ENCODE measurements at regions of chr3 and their contacts with region 1.

Region 1: GRCh38 chr3:44198284-44199269 is 43.1 kb upstream of the TOPAZ1 start:
- DNase-seq: no peak
- H3K4me3 ChIP-seq: no peak overlapping the region
- H3K27ac ChIP-seq: no peak overlapping the region
- H3K4me1 ChIP-seq: no peaks in the 10 kb centered on the region
- H3K27me3 ChIP-seq: no peaks in the 10 kb centered on the region
- CTCF ChIP-seq: peak; percentile 75 to 84 (median 77)
- EP300 ChIP-seq: no peak
- POLR2A ChIP-seq: no peak

Region 2: DNA sequence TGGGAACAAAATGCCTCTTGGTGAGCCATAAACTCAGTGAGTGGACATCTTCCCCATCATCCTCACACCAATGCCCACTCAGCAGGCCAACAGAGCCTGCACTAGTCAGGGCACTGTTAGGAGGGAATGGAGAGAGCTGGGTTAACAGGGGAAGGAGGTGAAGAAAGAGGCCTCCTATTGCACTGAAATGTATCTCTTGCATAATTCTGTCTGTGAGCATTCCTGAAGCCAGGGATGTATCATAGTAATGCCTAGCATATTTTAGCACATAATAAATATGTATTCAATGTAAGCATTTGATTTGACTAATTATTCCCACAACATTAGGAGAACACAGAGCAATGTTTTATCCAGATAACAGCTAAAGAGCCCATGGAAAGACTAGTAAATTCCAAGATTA is 658.0 kb before region 1 on chr3:
- intact Hi-C with region 1: loop called (anchors 2 kb)
- DNase-seq: no peak
- H3K4me3 ChIP-seq: no peak overlapping the region
- H3K27ac ChIP-seq: no peak overlapping the region
- H3K4me1 ChIP-seq: peaks cover 0 to 4% (median 2%) of the 10 kb centered on the region in 4 donors
- H3K27me3 ChIP-seq: no peaks in the 10 kb centered on the region
- CTCF ChIP-seq: no peak
- EP300 ChIP-seq: no peak
- POLR2A ChIP-seq: no peak

Region 3: DNA sequence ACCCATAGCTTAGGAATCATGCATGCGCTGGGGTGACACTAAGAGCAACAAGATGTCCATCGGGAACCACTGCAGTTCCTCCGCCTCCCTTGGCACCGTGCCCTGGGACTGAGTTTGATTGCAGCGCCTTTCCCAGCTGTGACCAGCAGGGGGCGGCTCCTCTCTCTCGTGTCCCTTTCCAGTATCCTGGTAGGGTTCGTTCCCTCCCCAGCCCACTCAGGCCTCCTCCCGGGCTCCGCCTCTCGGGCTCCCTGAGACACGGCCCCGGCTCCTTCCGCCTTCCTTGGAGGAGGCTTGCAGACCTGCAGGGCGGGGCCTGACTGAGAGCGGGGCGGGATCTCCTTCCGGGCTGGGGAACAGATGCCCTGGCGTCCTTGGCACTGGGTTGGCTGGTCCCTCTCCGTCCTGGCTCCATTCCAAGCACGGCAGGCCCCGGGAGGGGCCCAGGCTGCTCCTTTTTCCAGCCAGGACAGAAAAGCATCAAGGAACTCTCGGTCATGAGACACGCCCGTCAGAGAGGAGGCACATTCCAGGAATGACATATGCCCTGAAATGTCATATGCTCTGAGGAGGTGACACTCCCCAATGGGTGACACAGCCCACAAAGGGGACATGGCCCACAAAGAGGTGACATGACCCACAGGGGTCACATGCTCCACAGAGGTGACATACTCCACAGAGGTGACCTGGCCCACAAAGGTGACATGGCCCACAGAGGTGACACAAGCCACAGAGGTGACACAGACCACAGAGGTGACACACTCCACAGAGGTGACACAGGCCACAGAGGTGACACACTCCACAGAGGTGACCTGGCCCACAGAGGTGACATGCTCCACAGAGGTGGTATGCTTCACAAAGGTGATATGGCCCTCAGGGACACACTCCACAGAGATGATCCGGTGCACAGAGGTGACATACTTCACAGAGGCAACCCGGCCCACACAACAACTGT is 428.8 kb before region 1 on chr3:
- intact Hi-C with region 1: loop called (anchors 5 kb)
- DNase-seq: peak; percentile 99
- H3K4me3 ChIP-seq: peak overlapping the region; percentile 39 to 46 (median 44)
- H3K27ac ChIP-seq: peak overlapping the region; percentile 73 to 82 (median 76)
- H3K4me1 ChIP-seq: peaks cover 52 to 58% (median 56%) of the 10 kb centered on the region in 4 donors
- H3K27me3 ChIP-seq: no peaks in the 10 kb centered on the region
- CTCF ChIP-seq: peak; percentile 89 to 97 (median 94)
- EP300 ChIP-seq: no peak
- POLR2A ChIP-seq: no peak

Region 4: DNA sequence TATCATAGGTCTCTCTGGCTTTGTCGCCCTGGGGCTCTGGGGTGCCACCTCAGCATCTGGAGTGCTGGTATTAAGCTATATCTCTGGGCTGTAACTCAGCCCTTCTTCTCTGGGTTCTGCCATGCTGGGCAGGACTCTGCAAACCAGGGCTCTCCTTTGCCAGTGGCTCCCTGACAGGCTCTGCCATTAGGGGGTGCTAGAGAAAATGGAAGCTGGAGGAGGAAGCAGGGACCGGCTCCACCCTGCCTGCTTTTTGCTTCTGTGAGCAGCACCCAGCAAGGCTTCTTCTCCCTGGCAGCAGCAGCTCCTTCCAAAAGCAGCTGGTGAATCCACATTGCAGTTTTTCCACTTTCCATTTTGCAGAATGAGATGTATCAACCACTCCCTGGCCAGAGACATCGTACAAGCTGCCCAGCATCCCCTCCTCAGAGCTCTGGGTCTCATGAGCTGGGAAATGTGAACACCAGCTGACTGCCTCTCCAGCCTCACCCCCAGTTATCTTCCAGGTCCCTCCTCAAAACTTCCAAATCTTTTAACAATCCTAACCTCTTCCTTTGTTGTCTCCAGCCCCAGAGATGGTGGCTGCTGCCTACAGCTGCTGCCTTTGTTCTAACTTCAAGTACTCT is 342.8 kb before region 1 on chr3:
- intact Hi-C with region 1: loop called (anchors 10 kb)
- DNase-seq: peak; percentile 84
- H3K4me3 ChIP-seq: no peak overlapping the region
- H3K27ac ChIP-seq: no peak overlapping the region
- H3K4me1 ChIP-seq: peaks cover 0 to 4% (median 0%) of the 10 kb centered on the region in 4 donors
- H3K27me3 ChIP-seq: peaks cover 0 to 54% (median 3%) of the 10 kb centered on the region in 4 donors
- CTCF ChIP-seq: peak; percentile 43 to 65 (median 51)
- EP300 ChIP-seq: no peak
- POLR2A ChIP-seq: no peak

Region 5: GRCh38 chr3:44309500-44309899 is 110.9 kb after region 1 on chr3:
- intact Hi-C with region 1: no loop called
- DNase-seq: no peak
- H3K4me3 ChIP-seq: no peak overlapping the region
- H3K27ac ChIP-seq: no peak overlapping the region
- H3K4me1 ChIP-seq: no peaks in the 10 kb centered on the region
- H3K27me3 ChIP-seq: no peaks in the 10 kb centered on the region
- CTCF ChIP-seq: no peak
- EP300 ChIP-seq: no peak
- POLR2A ChIP-seq: no peak